ENCODE measurements at regions of chr11 and their contacts with region 1.

Region 1: DNA sequence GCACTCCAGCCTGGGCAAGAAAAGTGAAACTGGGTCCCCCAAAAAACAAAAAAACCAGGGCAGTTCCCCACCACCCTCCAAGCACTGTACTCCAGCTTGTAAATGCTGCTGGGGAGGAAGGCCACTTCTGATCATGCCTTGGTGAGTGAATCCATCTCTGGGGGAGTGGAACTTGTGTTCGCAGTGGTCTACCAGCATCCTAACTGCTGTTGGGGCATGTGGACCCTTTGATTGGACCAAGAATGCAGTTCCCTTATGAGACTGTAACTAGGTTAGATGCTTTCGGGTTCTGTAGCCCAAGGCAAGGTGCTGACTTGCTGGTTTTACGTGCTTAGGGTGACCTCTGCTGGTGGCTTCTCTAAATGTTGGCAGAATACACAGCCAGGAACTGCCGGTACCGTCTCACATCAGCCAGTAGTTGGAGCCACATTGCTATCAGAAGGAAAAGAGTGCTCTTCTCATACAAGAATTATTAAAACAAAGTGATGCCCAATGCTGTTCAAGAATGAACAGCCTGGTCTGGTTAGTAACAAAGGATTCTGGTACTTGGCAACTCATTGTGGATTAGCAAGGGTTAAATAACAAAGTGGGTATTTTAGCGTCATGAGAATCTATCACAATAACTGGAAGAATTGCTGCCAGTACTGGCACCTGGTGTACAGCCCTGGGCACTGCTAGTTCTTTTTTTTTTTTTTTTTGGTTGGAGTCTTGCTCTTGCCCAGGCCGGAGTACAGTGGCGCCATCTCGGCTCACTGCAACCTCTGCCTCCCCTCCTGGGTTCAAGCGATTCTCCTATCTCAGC is 13.0 kb downstream of the EIF1AD start:
- DNase-seq: peak; percentile 98
- ATAC-seq: peak; percentile 97
- H3K4me3 ChIP-seq: no peak overlapping the region
- H3K27ac ChIP-seq: no peak overlapping the region
- H3K4me1 ChIP-seq: no peaks in the 10 kb centered on the region
- H3K27me3 ChIP-seq: no peaks in the 10 kb centered on the region
- CTCF ChIP-seq: peak; percentile 99

Region 2: DNA sequence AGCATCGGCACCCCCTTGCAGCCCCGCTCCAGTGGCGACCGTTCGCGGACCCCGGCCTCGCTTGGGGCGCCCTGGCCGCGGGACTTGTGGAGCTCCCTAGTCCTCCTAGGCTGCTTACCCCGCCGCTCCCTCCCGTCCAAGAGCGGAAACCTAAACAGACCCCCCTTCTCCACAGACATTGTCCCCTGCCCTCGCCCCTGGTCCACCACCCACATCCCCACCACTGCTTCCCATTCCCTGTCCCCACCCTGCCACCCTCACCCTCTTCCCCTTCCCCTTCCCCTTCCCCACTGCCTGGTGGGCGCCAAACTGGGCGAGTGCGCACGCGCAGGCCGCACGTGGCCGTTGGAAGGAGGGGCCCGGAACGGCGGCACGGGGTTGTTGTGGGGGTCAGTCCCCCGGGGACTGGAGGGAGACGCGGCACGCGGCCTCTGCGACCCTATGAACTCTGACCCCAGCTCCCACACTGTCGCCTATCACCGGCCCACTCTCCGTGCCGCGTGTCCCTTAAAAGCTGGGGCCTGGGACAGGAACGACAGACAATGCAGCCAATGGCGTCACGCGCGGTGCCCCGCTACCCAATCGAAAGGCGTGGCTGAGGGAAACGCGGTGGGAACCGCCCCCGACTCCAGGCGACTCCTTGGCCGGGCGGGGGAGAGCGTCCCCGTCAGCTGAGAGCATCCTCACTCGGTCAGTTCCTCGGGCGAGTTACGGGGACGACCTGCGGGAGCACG is 155.5 kb before region 1 on chr11 and contains the start of gene SNX32:
- CTCF ChIA-PET with region 1: no interaction called
- POLR2A ChIA-PET with region 1: interaction called, 13 read pairs
- intact Hi-C with region 1: no loop called
- DNase-seq: peak; percentile 82
- ATAC-seq: peak; percentile 99
- H3K4me3 ChIP-seq: peak within 1 kb of the TSS; percentile 43; the same call in 1 of the 2 replicates
- H3K27ac ChIP-seq: no peak within 1 kb of the TSS
- H3K4me1 ChIP-seq: no peaks in the 10 kb centered on the region
- H3K27me3 ChIP-seq: peaks cover 20% of the 10 kb centered on the region; the same call in 1 of the 2 replicates
- CTCF ChIP-seq: no peak
- total RNA-seq, gene SNX32: not detected in 2 replicates

Region 3: GRCh38 chr11:65919146-65920033 is 69.6 kb before region 1 on chr11 and contains the start of gene DRAP1:
- CTCF ChIA-PET with region 1: no interaction called
- POLR2A ChIA-PET with region 1: no interaction called
- intact Hi-C with region 1: no loop called
- DNase-seq: peak; percentile 98
- ATAC-seq: peak; percentile 53
- H3K4me3 ChIP-seq: peak within 1 kb of the TSS; percentile 82
- H3K27ac ChIP-seq: peak within 1 kb of the TSS; percentile 93
- H3K4me1 ChIP-seq: peaks cover 46% of the 10 kb centered on the region
- H3K27me3 ChIP-seq: no peaks in the 10 kb centered on the region
- CTCF ChIP-seq: no peak
- total RNA-seq, gene DRAP1: 944 and 1,531 TPM in 2 replicates

Region 4: GRCh38 chr11:66045177-66045639 is 56.2 kb after region 1 on chr11:
- CTCF ChIA-PET with region 1: no interaction called
- POLR2A ChIA-PET with region 1: no interaction called
- intact Hi-C with region 1: loop called (anchors 1 kb)
- DNase-seq: peak; percentile 90
- ATAC-seq: peak; percentile 98
- H3K4me3 ChIP-seq: 0 out of 2 replicates have a peak overlapping the region, but pooled peaks have one; percentile 15
- H3K27ac ChIP-seq: no peak overlapping the region
- H3K4me1 ChIP-seq: no peaks in the 10 kb centered on the region
- H3K27me3 ChIP-seq: no peaks in the 10 kb centered on the region
- CTCF ChIP-seq: peak; percentile 99

Region 5: DNA sequence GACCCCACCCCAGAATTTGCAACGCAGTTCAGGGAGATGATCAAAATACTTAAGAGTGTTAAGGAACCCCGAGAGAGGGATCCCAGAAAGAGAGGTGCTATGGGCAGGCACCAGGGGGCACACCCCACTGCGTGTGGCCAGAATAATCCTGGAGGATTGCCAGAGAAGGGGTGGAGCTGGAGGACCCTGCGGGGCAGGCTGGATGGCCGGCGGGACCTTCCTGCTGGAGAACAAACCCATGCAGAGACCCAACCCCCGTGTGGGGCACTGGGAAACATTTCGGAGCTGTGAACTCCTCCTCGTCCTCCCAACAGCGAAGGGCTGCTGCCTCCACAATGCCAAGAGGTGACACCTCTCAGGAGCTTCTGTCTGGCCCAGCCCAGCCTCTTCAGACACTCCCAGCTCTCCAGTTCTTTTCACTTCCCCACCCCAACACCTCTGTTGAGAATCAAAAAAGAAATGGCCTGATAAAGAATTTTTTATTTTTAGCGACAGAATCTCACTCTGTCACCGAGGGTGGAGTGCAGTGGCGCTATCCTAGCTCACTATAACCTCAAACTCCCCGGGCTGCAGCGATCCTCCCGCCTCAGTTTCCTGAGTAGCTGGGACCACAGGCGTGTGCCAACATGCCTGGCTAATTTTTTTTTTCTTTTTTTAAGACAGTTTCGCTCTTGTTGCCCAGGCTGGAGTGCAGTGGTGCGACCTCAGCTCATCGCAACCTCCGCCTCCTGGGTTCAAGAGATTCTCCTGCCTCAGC is 1093.2 kb after region 1 on chr11:
- CTCF ChIA-PET with region 1: no interaction called
- POLR2A ChIA-PET with region 1: interaction called, 17 read pairs
- intact Hi-C with region 1: no loop called
- DNase-seq: no peak
- ATAC-seq: no peak
- H3K4me3 ChIP-seq: no peak overlapping the region
- H3K27ac ChIP-seq: no peak overlapping the region
- H3K4me1 ChIP-seq: peaks cover 19% of the 10 kb centered on the region
- H3K27me3 ChIP-seq: no peaks in the 10 kb centered on the region
- CTCF ChIP-seq: no peak